ENCODE measurements at regions of chr1 and their contacts with region 1.

Region 1: DNA sequence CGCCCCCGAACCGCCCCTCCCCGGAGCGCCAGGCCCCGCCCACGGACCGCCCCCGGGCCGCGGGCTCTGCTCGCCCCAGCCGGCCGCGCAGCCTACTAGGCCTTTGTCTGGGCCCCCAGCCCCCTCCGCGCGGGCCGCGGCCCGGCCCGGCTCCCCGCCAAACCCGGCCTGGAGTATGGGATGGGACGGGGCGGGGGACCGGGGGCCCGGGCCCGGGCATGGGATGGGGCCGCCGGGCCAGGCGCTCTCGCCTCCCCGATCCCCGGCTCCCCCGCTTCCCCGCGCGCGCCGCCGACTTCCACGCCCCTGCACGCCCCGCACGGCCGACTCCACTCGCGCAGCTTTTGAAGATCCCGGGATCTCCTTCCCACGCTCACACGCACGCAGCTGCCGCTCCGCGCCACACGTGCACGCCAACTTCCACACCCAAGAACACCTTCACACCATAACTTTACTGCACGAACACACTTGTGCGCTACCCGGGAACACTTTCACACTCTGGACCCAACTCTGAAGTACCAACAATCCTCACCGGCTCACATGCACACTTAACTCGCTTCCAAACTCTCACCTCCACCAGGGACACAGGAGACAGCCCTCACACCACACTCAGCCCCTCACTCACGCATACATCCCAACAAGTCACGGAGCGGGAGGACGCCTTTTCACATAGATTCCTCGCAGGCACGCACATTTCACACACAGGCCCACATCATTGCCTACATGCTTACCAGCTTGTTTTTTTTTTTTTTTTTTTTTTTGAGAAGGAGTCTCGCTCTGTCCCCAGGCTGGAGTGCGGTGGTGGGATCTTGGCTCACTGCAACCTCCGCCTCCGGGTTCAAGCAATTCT is 487 bp upstream of the HSPG2 start:
- DNase-seq: peak in 1 of 2 donors; percentile 83
- H3K4me3 ChIP-seq: peak overlapping the region; percentile 57 to 70
- H3K27ac ChIP-seq: peak overlapping the region; percentile 94 to 95
- H3K4me1 ChIP-seq: peaks cover 17 to 63% of the 10 kb centered on the region in 2 donors
- H3K27me3 ChIP-seq: no peaks in the 10 kb centered on the region
- CTCF ChIP-seq: no peak

Region 2: DNA sequence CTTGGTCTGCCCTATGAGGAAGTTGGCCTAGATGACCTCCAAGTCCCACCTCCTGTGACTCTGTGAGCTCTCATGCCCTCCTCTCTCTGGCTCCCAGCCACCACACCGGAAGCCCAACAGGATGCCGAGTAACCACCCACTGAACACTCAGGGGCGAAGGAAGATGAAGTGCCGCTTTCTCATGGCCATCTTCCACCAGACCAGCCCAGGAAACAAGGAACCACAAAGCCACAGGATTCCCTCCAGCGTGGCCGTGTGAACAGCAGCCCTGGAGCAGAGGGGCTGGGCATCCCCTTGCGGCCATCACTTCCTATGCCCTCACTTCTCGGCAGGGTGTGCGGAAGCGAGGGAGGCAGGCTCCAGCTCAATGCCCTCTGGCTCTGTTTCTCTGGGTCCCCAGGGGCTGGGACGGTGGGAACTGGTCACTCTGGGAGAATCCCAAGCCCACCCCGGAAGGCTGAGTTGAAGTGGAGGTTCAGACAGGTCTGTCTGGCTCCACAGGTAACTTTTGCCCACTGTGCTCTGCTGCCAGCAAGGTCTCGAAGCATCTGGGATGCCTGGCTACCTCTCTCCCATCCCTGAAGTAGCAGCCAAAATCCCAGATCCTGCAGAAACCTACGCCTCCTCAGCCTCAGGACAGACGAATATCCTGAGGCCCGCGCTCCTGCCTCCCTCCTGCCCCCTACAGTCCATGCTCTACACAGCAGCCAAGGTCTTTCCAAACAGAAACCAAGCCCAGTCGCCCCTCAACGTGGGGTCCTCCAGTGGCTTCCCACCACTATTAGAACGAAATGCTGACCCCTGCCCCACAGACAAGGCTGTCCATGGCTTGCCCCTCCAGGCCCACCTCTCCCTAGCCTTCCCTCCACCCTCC is 603.1 kb before region 1 on chr1:
- intact Hi-C with region 1: loop called (anchors 10 kb)
- DNase-seq: peak; percentile 70 to 94
- H3K4me3 ChIP-seq: peak overlapping the region; percentile 47 to 59
- H3K27ac ChIP-seq: peak overlapping the region; percentile 95 to 97
- H3K4me1 ChIP-seq: peaks cover 68 to 94% of the 10 kb centered on the region in 2 donors
- H3K27me3 ChIP-seq: no peaks in the 10 kb centered on the region
- CTCF ChIP-seq: peak; percentile 87 to 90 (median 88)

Region 3: DNA sequence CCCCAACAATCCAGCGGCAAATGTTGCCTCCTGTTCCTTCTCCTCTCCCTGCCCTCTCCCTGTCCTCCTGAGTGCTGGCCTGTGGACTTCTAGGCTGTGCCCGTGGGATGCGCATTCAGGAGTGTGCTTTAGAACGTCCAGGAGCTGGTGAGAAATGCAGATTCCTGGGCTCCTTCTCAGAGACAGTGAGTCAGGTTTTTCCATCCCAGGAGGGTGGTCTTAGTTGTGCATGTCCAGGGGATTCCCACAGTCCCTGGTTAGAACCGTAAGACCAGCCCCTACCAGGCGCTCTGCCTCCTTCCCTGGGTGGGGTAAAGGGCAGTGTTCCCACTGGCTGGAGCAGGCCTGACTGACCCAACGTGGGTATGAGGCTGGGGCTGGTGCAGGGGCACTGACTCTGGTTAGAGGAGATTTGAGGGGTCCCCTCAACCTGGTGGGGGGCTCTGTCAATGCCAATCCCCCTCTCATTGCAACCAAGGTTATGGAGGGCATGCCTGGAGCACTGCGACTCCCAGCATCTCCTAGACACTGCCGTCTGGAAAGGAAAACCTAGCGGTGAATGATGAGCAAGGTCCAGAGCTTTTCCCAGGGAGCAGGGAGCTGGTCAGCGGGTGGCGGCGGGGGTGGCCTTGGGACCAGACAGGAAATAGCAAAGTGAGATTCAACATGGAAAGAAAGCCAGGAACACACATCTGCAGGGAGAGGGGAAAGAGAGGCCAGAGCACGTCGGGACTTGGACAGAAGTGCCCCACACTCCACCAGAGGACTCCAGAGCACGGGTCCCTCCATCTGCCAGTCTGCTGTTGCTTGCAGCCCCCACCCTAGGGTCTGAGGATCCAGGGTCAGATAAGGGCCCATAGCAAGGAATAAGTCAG is 39.0 kb before region 1 on chr1:
- intact Hi-C with region 1: loop called (anchors 2 kb)
- DNase-seq: peak in 1 of 2 donors; percentile 83
- H3K4me3 ChIP-seq: no peak overlapping the region
- H3K27ac ChIP-seq: peak overlapping the region; percentile 94 to 96
- H3K4me1 ChIP-seq: peaks cover 61 to 93% of the 10 kb centered on the region in 2 donors
- H3K27me3 ChIP-seq: no peaks in the 10 kb centered on the region
- CTCF ChIP-seq: peak in 1 of 3 experiments; percentile 10

Region 4: DNA sequence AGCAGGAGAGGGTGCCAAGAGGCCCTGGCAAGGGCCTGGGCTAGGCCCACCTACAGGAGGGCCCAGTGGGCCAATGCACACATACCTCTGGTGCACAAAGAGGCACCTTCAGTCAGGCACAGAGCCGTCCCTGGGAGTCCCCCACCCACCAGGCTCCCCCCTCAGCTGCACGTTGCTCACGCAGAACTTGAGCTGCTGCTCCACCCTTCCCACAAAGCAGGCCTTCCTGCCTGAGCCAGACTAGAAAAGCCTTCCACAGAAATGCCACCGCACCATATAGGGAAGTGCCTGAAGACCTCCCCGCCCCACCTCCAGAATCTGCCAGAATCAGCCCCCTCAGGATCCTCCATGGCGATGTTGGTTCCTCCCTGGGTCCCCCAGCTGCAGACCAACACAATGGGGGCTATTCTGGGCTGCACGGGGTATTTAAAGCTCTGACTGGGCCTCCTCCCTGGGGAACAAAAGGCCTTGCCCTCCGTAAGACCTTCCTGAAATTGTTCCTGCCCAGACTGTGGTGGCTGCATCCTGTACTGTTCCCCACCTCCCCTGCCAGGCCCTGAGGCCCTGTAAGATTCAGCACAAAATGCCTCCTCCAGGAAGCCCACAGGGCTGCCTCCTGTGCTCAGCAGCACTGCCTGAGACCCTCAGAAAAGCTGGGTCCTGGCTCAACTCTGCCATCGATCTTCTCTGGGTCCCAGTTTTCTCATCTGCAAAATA is 27.7 kb before region 1 on chr1:
- intact Hi-C with region 1: loop called (anchors 2 kb)
- DNase-seq: peak; percentile 69 to 90
- H3K4me3 ChIP-seq: no peak overlapping the region
- H3K27ac ChIP-seq: peak overlapping the region; percentile 94 to 96
- H3K4me1 ChIP-seq: peaks cover 74 to 100% of the 10 kb centered on the region in 2 donors
- H3K27me3 ChIP-seq: no peaks in the 10 kb centered on the region
- CTCF ChIP-seq: peak in 1 of 3 experiments; percentile 11

Region 5: GRCh38 chr1:21963477-21964217 is 26.1 kb after region 1 on chr1:
- intact Hi-C with region 1: loop called (anchors 2 kb)
- DNase-seq: peak in 1 of 2 donors; percentile 89
- H3K4me3 ChIP-seq: no peak overlapping the region
- H3K27ac ChIP-seq: no peak overlapping the region
- H3K4me1 ChIP-seq: no peaks in the 10 kb centered on the region
- H3K27me3 ChIP-seq: no peaks in the 10 kb centered on the region
- CTCF ChIP-seq: peak; percentile 89 to 95 (median 92)